CD8-positive, alpha-beta T cell (primary cell): ENCODE measurements at regions of chr2 and their contacts with region 1.

Region 1: DNA sequence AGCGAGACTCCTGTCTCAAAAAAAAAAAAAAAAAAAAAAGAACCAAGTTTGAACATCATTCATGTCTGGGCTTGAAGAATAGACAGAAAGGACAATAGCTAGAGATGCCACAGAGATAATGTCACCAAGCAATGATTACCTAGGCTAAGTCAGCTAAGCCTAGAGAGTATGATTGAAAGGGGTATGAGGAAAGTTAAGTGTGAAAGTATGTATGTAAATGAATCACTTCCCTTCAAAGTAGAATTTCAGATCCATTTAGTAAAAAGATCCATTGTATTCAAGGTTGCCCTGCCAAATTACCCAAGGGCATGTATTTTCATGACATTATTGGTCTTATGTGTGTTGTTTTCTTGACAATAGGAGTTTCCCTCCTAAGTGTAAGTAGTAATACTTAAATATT is 34.1 kb upstream of the SLC39A10 start:
- DNase-seq: no peak
- ATAC-seq: no peak
- H3K4me3 ChIP-seq: no peak overlapping the region
- H3K4me3 Mint-ChIP-seq: no peak overlapping the region
- H3K27ac ChIP-seq: no peak overlapping the region
- H3K27ac Mint-ChIP-seq: no peak overlapping the region
- H3K4me1 ChIP-seq: no peaks in the 10 kb centered on the region
- H3K4me1 Mint-ChIP-seq: peaks cover 6% of the 10 kb centered on the region
- H3K27me3 ChIP-seq: no peaks in the 10 kb centered on the region
- H3K27me3 Mint-ChIP-seq: no peaks in the 10 kb centered on the region
- CTCF ChIP-seq: no peak

Region 2: GRCh38 chr2:195586062-195586714 is 36.8 kb before region 1 on chr2:
- CTCF ChIA-PET with region 1: interaction called, 3 read pairs
- POLR2A ChIA-PET with region 1: interaction called, 5 read pairs
- intact Hi-C with region 1: loop called in 1 of 2 experiments (anchors 5 kb)
- DNase-seq: no peak
- ATAC-seq: no peak
- H3K4me3 ChIP-seq: no peak overlapping the region
- H3K4me3 Mint-ChIP-seq: no peak overlapping the region
- H3K27ac ChIP-seq: no peak overlapping the region
- H3K27ac Mint-ChIP-seq: no peak overlapping the region
- H3K4me1 ChIP-seq: no peaks in the 10 kb centered on the region
- H3K4me1 Mint-ChIP-seq: peaks cover 4% of the 10 kb centered on the region
- H3K27me3 ChIP-seq: no peaks in the 10 kb centered on the region
- H3K27me3 Mint-ChIP-seq: no peaks in the 10 kb centered on the region
- CTCF ChIP-seq: no peak

Region 3: DNA sequence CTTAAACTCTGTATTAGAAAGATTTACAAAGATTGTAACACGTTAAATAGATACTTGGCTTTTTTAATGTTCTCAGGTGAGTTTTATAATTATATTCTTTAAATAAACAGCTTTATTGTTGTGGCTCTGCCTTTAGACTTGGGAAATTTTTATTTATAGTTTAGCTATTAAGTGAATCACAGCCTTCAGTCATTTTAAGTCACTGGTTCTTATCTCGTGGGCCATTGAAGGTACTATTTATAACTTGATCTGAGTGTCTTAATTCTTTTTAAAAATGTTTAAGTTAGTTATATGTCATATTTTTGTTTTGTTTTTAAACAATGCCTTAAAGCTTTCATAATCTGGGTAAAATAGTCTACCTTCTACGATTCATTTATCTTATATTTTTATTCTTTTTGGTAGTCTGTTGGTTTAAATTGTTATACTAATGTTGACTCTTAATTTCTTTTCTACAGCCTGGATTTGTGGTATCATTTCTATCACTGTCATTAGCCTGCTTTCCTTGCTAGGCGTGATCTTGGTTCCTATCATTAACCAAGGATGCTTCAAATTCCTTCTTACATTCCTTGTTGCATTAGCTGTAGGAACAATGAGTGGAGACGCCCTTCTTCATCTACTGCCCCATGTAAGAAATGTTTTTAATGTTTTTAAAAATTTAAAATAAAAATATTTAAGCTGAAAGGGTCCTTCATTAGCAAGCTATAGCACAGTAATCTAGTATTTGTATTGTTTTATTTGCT is 83.4 kb after region 1 on chr2:
- CTCF ChIA-PET with region 1: no interaction called
- POLR2A ChIA-PET with region 1: no interaction called
- intact Hi-C with region 1: loop called in 1 of 2 experiments (anchors 1 kb)
- DNase-seq: no peak
- ATAC-seq: no peak
- H3K4me3 ChIP-seq: no peak overlapping the region
- H3K4me3 Mint-ChIP-seq: no peak overlapping the region
- H3K27ac ChIP-seq: no peak overlapping the region
- H3K27ac Mint-ChIP-seq: no peak overlapping the region
- H3K4me1 ChIP-seq: no peaks in the 10 kb centered on the region
- H3K4me1 Mint-ChIP-seq: peaks cover 17% of the 10 kb centered on the region
- H3K27me3 ChIP-seq: no peaks in the 10 kb centered on the region
- H3K27me3 Mint-ChIP-seq: no peaks in the 10 kb centered on the region
- CTCF ChIP-seq: no peak

Region 4: DNA sequence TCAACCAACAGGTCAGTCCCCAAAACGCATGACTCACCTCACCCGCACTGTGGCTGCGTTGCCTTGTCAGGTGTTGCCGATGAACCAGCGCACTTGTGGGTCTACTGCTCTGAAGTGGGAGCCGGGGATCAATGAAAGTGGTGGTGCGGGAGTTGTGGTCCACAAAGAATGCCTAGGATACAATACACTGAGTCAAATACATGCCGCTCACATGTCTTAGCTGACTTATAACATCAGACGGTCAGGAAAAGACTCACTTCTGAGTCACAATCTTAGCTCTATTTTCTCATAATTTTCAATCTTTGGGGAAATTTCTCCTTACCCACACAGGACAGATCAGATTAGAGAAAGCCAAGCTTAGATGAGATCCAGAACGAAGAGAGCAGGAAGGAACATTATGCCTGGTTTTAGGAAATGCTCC is 655.5 kb after region 1 on chr2:
- CTCF ChIA-PET with region 1: no interaction called
- POLR2A ChIA-PET with region 1: no interaction called
- intact Hi-C with region 1: no loop called
- DNase-seq: peak in 3 of 9 experiments; percentile 21 to 38 (median 26)
- ATAC-seq: no peak
- H3K4me3 ChIP-seq: no peak overlapping the region
- H3K4me3 Mint-ChIP-seq: no peak overlapping the region
- H3K27ac ChIP-seq: no peak overlapping the region
- H3K27ac Mint-ChIP-seq: no peak overlapping the region
- H3K4me1 ChIP-seq: peaks cover 34% of the 10 kb centered on the region
- H3K4me1 Mint-ChIP-seq: peaks cover 36% of the 10 kb centered on the region
- H3K27me3 ChIP-seq: no peaks in the 10 kb centered on the region
- H3K27me3 Mint-ChIP-seq: no peaks in the 10 kb centered on the region
- CTCF ChIP-seq: no peak